Left ventricle myocardium inferior (tissue), 1 donor: ENCODE measurements at regions of chr9 and their contacts with region 1.

Region 1: DNA sequence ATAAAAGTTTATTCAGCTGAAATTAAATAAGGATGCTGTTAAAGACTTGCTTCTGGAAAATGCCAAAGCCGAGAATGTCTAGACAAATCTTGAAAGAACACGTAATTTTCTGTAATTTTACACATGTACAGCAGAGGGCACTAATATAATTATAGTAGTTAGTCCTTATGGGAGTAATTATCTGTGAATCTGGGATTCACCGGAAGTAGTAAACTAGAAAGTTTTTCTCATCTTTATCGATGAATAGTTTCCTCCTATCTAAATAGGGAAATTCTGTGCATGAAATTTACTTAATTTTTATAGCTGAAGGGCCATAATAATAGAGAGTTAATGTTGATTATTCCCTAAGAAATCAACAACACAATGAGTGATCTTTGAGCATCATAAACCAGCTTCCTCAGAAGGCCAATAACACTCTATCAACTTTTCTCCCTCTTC is 18.4 kb upstream of the CNTLN start:
- DNase-seq: no peak
- H3K4me3 ChIP-seq: no peak overlapping the region
- H3K27ac ChIP-seq: no peak overlapping the region
- H3K4me1 ChIP-seq: no peaks in the 10 kb centered on the region
- H3K27me3 ChIP-seq: no peaks in the 10 kb centered on the region
- CTCF ChIP-seq: peak; percentile 69

Region 2: DNA sequence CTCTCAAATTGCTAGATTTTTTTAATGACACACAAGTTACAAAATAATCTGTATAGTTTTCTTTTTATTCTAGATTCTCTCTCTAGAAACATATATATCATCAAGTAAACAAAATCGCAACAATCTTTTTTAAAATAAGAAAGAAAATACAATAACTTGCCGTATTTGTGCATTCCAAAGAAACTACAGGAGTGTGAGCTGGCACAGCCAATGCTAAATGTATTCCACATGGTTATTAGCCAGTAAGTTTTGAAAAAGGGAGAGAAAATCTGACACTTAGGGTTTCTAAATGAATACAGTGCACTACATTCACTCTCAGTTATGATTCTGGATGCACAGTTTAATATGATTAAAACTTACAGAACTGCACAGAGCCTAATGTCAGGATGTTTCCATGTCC is 363.8 kb before region 1 on chr9:
- intact Hi-C with region 1: no loop called
- DNase-seq: no peak
- H3K4me3 ChIP-seq: no peak overlapping the region
- H3K27ac ChIP-seq: no peak overlapping the region
- H3K4me1 ChIP-seq: no peaks in the 10 kb centered on the region
- H3K27me3 ChIP-seq: peaks cover 9% of the 10 kb centered on the region
- CTCF ChIP-seq: no peak

Region 3: GRCh38 chr9:17171309-17172094 is 55.1 kb after region 1 on chr9:
- intact Hi-C with region 1: no loop called
- DNase-seq: no peak
- H3K4me3 ChIP-seq: no peak overlapping the region
- H3K27ac ChIP-seq: no peak overlapping the region
- H3K4me1 ChIP-seq: no peaks in the 10 kb centered on the region
- H3K27me3 ChIP-seq: no peaks in the 10 kb centered on the region
- CTCF ChIP-seq: no peak

Region 4: GRCh38 chr9:17229945-17230560 is 113.6 kb after region 1 on chr9:
- intact Hi-C with region 1: no loop called
- DNase-seq: no peak
- H3K4me3 ChIP-seq: no peak overlapping the region
- H3K27ac ChIP-seq: no peak overlapping the region
- H3K4me1 ChIP-seq: no peaks in the 10 kb centered on the region
- H3K27me3 ChIP-seq: no peaks in the 10 kb centered on the region
- CTCF ChIP-seq: no peak

Region 5: GRCh38 chr9:17462869-17463464 is 346.5 kb after region 1 on chr9:
- intact Hi-C with region 1: loop called (anchors 5 kb)
- DNase-seq: no peak
- H3K4me3 ChIP-seq: no peak overlapping the region
- H3K27ac ChIP-seq: no peak overlapping the region
- H3K4me1 ChIP-seq: no peaks in the 10 kb centered on the region
- H3K27me3 ChIP-seq: no peaks in the 10 kb centered on the region
- CTCF ChIP-seq: peak; percentile 81